Activated T-helper 2 cell treated with anti-CD3 and anti-CD28 coated beads, Interferon-gamma antibody, Interleukin-2, Interleukin-4, amounts not matched to agents 10 μg/mL and 5 μg/mL and 100 μg/mL, durations not matched to agents 14 hours and 24 hours and 36 hours (primary cell): ENCODE measurements at regions of chr2 and their contacts with region 1.

Region 1: DNA sequence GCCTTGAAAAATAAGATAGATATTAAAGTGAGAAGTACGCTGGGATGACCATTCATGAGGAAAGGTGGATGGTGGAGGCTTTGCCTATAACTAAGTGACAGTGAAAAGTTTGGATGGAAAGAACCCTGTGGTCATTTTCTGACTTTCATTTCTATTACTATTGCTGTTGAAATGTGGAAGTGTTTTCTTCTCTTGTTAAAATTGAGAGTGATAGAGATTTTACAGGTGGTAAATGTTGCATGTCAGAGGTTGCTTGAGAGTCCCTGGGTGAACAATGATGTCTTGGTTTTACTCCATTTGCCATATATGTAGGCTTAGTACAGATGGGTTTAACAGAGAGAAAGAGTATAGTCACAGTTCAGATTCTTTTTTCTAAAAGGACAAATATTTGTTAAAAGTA is 18.4 kb downstream of the NCOA1 start:
- DNase-seq: no peak
- H3K4me3 Mint-ChIP-seq: no peak overlapping the region
- H3K27ac Mint-ChIP-seq: peak overlapping the region; percentile 40
- H3K4me1 Mint-ChIP-seq: peaks cover 46% of the 10 kb centered on the region
- H3K27me3 Mint-ChIP-seq: no peaks in the 10 kb centered on the region

Region 2: DNA sequence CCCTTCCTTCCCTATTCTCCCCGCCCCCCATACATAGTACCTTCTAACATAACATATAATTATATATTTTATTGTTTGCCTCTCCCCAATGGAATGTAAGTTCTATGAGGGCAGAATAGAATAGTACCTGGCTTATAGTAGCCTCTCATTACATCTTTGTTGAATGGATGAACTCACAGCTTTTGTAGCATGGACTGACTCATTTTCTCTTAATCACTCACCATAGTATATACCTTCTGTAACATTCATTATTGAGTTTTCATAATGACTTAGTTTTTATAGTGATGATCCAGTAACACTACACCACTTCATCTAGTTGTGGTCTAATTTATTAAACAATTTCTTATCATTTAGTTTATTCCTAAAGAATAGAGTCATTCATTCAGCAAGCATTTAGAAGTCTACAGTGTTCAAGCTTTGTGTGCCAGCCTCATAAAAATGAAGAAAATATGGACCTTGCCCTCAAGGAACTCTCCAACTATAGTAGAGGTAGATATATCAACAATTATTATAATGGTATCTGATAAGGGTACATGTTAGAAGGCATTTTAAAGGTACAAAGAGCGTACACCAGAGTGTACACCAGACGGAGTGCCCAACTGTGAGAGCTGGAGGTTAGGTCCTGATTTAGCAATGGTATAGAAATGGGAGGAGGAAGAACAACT is 12.7 kb after region 1 on chr2:
- intact Hi-C with region 1: loop called (anchors 1 kb)
- DNase-seq: no peak
- H3K4me3 Mint-ChIP-seq: no peak overlapping the region
- H3K27ac Mint-ChIP-seq: peak overlapping the region; percentile 84
- H3K4me1 Mint-ChIP-seq: peaks cover 39% of the 10 kb centered on the region
- H3K27me3 Mint-ChIP-seq: no peaks in the 10 kb centered on the region